Mammary epithelial cell (primary cell): ENCODE measurements at regions of chr15 and their contacts with region 1.

Region 1: GRCh38 chr15:93362821-93363220 is 273.8 kb upstream of the RGMA start:
- DNase-seq: no peak
- H3K4me3 ChIP-seq: no peak overlapping the region
- H3K27ac ChIP-seq: no peak overlapping the region
- H3K4me1 ChIP-seq: no peaks in the 10 kb centered on the region
- H3K27me3 ChIP-seq: no peaks in the 10 kb centered on the region
- CTCF ChIP-seq: no peak

Region 2: GRCh38 chr15:93288728-93289294 is 74.0 kb before region 1 on chr15:
- CTCF ChIA-PET with region 1: no interaction called
- dilution Hi-C with region 1: loop called (anchors 5 kb)
- in situ Hi-C with region 1: no loop called
- intact Hi-C with region 1: no loop called
- DNase-seq: no peak
- H3K4me3 ChIP-seq: no peak overlapping the region
- H3K27ac ChIP-seq: no peak overlapping the region
- H3K4me1 ChIP-seq: no peaks in the 10 kb centered on the region
- H3K27me3 ChIP-seq: no peaks in the 10 kb centered on the region
- CTCF ChIP-seq: no peak

Region 3: DNA sequence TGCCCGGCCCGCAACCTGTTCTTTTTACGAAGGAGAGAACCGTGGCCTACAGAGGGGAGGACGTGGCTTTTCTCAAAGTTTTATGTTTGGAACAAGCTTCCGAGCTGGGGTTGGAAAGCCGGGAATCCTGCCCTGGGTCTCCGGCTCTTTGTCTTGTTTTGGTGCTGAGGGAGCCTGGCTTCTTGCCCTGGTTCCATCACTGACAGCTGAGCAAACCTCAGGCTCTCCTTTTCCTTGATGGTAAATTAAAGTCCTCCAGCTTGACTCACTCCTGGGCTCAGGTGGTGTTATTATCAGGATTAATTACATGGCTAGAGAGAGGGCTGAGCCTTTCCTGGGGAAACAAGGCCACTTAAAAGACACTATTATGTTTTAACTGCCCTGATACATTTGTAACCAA is 15.7 kb after region 1 on chr15:
- CTCF ChIA-PET with region 1: no interaction called
- dilution Hi-C with region 1: no loop called
- in situ Hi-C with region 1: no loop called
- intact Hi-C with region 1: no loop called
- DNase-seq: no peak
- H3K4me3 ChIP-seq: no peak overlapping the region
- H3K27ac ChIP-seq: no peak overlapping the region
- H3K4me1 ChIP-seq: no peaks in the 10 kb centered on the region
- H3K27me3 ChIP-seq: no peaks in the 10 kb centered on the region
- CTCF ChIP-seq: no peak

Region 4: GRCh38 chr15:93683651-93684050 is 320.8 kb after region 1 on chr15:
- CTCF ChIA-PET with region 1: no interaction called
- dilution Hi-C with region 1: no loop called
- in situ Hi-C with region 1: no loop called
- intact Hi-C with region 1: no loop called
- DNase-seq: no peak
- H3K4me3 ChIP-seq: no peak overlapping the region
- H3K27ac ChIP-seq: no peak overlapping the region
- H3K4me1 ChIP-seq: no peaks in the 10 kb centered on the region
- H3K27me3 ChIP-seq: no peaks in the 10 kb centered on the region
- CTCF ChIP-seq: no peak

Region 5: GRCh38 chr15:93913310-93913709 is 550.5 kb after region 1 on chr15:
- CTCF ChIA-PET with region 1: no interaction called
- dilution Hi-C with region 1: no loop called
- in situ Hi-C with region 1: no loop called
- intact Hi-C with region 1: no loop called
- DNase-seq: no peak
- H3K4me3 ChIP-seq: no peak overlapping the region
- H3K27ac ChIP-seq: no peak overlapping the region
- H3K4me1 ChIP-seq: no peaks in the 10 kb centered on the region
- H3K27me3 ChIP-seq: no peaks in the 10 kb centered on the region
- CTCF ChIP-seq: no peak